ENCODE measurements at regions of chr15 and their contacts with region 1.

Region 1: GRCh38 chr15:78709263-78709882 is 68.4 kb upstream of the CHRNB4 start:
- DNase-seq: peak in 1 of 2 experiments; percentile 94
- H3K4me3 ChIP-seq: no peak overlapping the region
- H3K27ac ChIP-seq: no peak overlapping the region
- H3K4me1 ChIP-seq: peaks cover 0 to 5% (median 0%) of the 10 kb centered on the region in 4 experiments; a peak in 2 of 7 replicates
- H3K27me3 ChIP-seq: peaks cover 0 to 3% (median 1%) of the 10 kb centered on the region in 4 experiments; a peak in 2 of 7 replicates
- CTCF ChIP-seq: peak; percentile 86 to 96 (median 88)
- EP300 ChIP-seq: no peak
- POLR2A ChIP-seq: no peak
- RAD21 ChIP-seq: peak; percentile 97 to 99

Region 2: DNA sequence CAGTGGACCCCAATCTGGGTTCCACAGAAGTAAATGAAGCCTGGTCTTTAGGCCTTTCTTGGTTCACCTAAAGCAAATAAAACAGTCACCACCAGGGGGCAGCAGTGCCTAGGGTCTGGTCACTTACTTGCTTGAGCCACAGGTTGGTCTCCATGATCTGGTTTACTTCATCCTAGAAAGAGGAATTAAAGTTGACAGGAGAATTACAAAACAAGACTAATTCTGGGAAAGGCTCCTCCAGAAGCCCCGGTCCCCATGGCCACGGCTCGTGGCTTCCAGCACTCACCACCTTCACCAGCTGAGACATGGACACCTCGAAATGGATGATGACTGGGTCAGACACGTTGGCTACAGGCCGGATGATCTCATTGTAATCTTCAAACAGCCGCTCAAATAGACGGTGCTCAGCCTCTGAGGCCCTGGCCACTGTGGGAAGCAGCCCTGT is 90.9 kb before region 1 on chr15:
- CTCF ChIA-PET with region 1: interaction called, 81 read pairs
- POLR2A ChIA-PET with region 1: no interaction called
- DNase-seq: peak; percentile 72 to 98
- H3K4me3 ChIP-seq: no peak overlapping the region
- H3K27ac ChIP-seq: no peak overlapping the region
- H3K4me1 ChIP-seq: peaks cover 0 to 10% (median 2%) of the 10 kb centered on the region in 4 experiments; a peak in 6 of 7 replicates
- H3K27me3 ChIP-seq: peaks cover 6 to 39% (median 35%) of the 10 kb centered on the region in 4 experiments
- CTCF ChIP-seq: peak; percentile 60 to 92 (median 82)
- EP300 ChIP-seq: no peak
- POLR2A ChIP-seq: no peak
- RAD21 ChIP-seq: peak; percentile 89 to 92

Region 3: DNA sequence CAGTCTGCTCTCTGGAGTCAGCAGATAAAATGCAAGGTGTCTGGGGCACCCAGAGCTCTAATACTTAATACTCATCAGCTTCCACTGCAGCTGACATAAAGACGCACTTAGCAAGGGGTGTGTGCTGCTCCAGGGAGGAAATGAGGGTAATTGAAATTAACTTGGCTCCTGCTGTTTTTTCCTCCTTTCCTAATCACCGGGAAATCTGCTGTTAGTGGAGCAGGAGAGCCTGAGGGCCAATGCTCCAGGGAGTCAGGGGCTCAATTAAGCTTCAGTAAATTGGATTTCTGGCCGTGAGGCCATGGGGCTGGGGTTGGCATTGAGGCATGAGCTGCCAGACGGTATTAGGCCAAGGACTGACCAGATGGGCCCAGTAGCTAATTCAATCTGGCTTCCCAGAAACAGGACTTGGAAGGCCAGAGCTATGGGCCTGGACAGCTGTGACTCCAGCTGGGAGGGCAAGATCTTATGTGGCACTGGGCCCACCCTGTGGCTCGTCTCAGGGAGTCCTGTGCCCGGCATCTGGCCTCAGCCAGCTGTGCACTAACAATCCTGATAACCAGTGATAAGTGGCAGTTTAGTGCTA is 37.7 kb before region 1 on chr15:
- CTCF ChIA-PET with region 1: interaction called, 17 read pairs
- POLR2A ChIA-PET with region 1: no interaction called
- DNase-seq: peak; percentile 49 to 60
- H3K4me3 ChIP-seq: no peak overlapping the region
- H3K27ac ChIP-seq: no peak overlapping the region
- H3K4me1 ChIP-seq: peaks cover 7 to 24% (median 16%) of the 10 kb centered on the region in 4 experiments
- H3K27me3 ChIP-seq: peaks cover 0 to 6% (median 4%) of the 10 kb centered on the region in 4 experiments; a peak in 3 of 7 replicates
- CTCF ChIP-seq: no peak
- EP300 ChIP-seq: no peak
- POLR2A ChIP-seq: no peak
- RAD21 ChIP-seq: no peak

Region 4: DNA sequence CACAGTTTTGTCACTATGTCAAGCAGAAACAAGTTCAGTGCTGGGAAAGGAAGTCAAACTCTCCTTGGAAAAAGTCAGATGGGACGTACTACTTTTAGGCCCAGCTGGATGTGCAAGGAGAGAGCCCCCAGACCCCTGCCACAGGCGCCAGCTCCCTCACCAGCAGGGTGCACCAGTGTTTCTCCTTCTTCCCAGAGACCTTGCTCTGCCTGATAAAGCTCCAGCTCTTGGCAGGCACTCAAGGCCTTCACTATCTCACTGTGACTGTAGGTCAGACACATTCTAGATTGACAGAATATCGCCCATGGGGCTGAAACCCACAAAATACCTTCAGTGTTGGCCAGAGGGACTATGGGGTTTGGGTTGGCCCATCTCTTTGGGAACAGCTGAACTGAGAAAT is 13.5 kb before region 1 on chr15:
- CTCF ChIA-PET with region 1: interaction called, 45 read pairs
- POLR2A ChIA-PET with region 1: no interaction called
- DNase-seq: no peak
- H3K4me3 ChIP-seq: no peak overlapping the region
- H3K27ac ChIP-seq: no peak overlapping the region
- H3K4me1 ChIP-seq: peaks cover 0 to 7% (median 3%) of the 10 kb centered on the region in 4 experiments; a peak in 4 of 7 replicates
- H3K27me3 ChIP-seq: no peaks in the 10 kb centered on the region
- CTCF ChIP-seq: peak in 2 of 3 experiments; percentile 19 to 34; a peak in 2 of 4 replicates
- EP300 ChIP-seq: no peak
- POLR2A ChIP-seq: no peak
- RAD21 ChIP-seq: 0 out of 4 replicates have a peak, but pooled peaks of 1 of the 2 experiments have one; percentile 7

Region 5: GRCh38 chr15:78739996-78740903 is 30.9 kb after region 1 on chr15:
- CTCF ChIA-PET with region 1: interaction called, 30 read pairs
- POLR2A ChIA-PET with region 1: no interaction called
- DNase-seq: peak in 1 of 2 experiments; percentile 96
- H3K4me3 ChIP-seq: no peak overlapping the region
- H3K27ac ChIP-seq: no peak overlapping the region
- H3K4me1 ChIP-seq: peaks cover 0 to 7% (median 3%) of the 10 kb centered on the region in 4 experiments; a peak in 4 of 7 replicates
- H3K27me3 ChIP-seq: no peaks in the 10 kb centered on the region
- CTCF ChIP-seq: peak; percentile 76 to 88 (median 79)
- EP300 ChIP-seq: no peak
- POLR2A ChIP-seq: no peak
- RAD21 ChIP-seq: peak; percentile 49 to 53